ENCODE measurements at regions of chr7 and their contacts with region 1.

Region 1: DNA sequence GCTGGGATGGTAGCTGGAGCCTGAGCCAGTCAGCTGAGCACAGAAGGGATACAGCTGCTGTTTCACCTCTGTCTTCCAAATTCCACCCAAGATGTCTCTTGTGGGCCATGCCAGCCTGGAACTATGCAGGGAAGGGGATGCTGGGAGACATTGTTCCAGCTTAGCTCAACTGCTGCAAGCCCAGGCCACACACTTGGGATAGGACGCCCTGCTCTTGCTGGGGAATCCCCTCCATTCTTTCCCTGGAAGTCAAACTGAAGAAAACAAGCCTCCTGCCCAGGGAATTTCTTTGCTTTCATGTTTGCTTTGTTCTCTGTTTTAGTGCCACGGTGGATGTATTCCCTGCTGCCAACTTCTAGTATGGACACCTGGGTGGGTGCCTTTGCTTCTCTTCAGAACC is 55.2 kb upstream of the CDK13 start:
- DNase-seq: peak; percentile 19
- H3K4me3 ChIP-seq: no peak overlapping the region
- H3K27ac ChIP-seq: no peak overlapping the region
- H3K4me1 ChIP-seq: no peaks in the 10 kb centered on the region
- H3K27me3 ChIP-seq: peaks cover 22 to 28% of the 10 kb centered on the region in 2 experiments
- CTCF ChIP-seq: no peak
- POLR2A ChIP-seq: no peak

Region 2: DNA sequence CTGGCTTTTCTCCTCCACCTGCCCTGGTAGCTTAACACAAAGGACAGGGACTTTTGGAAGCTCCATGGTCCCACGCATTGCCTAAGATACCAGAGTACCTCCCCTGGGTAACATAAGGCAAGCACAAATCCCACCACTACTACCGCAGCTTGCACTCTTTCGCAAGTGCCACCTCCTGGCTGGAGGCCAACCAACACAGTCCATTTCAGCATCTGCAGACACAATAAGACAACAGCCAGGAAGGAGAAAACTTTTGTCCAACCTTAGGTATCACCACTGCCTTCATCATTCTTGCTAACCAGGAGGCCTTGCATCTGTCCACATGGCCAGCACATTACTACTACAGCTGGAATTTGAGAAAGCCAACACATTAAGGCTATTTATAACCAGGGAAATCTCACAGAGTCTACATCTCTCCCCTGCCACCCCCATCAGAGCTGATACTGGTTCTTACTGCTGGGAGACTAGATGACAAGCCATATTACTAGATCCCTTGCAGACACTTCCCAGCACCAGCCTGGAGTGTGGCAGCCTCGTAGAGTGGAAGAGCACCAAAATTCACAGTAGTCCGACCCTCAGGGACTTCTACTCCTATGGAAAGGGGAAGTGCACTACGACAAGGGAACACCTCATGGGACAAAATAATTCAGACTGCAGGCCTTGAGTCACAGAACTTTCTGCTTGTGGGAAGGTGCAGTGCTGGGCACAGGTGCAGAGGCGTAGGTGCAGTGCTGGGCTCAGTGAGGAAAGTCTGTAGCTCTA is 15.4 kb after region 1 on chr7:
- CTCF ChIA-PET with region 1: interaction called, 30 read pairs
- POLR2A ChIA-PET with region 1: no interaction called
- dilution Hi-C with region 1: no loop called
- intact Hi-C with region 1: no loop called
- DNase-seq: no peak
- H3K4me3 ChIP-seq: no peak overlapping the region
- H3K27ac ChIP-seq: no peak overlapping the region
- H3K4me1 ChIP-seq: no peaks in the 10 kb centered on the region
- H3K27me3 ChIP-seq: peaks cover 0 to 4% of the 10 kb centered on the region in 2 experiments
- CTCF ChIP-seq: no peak
- POLR2A ChIP-seq: no peak

Region 3: DNA sequence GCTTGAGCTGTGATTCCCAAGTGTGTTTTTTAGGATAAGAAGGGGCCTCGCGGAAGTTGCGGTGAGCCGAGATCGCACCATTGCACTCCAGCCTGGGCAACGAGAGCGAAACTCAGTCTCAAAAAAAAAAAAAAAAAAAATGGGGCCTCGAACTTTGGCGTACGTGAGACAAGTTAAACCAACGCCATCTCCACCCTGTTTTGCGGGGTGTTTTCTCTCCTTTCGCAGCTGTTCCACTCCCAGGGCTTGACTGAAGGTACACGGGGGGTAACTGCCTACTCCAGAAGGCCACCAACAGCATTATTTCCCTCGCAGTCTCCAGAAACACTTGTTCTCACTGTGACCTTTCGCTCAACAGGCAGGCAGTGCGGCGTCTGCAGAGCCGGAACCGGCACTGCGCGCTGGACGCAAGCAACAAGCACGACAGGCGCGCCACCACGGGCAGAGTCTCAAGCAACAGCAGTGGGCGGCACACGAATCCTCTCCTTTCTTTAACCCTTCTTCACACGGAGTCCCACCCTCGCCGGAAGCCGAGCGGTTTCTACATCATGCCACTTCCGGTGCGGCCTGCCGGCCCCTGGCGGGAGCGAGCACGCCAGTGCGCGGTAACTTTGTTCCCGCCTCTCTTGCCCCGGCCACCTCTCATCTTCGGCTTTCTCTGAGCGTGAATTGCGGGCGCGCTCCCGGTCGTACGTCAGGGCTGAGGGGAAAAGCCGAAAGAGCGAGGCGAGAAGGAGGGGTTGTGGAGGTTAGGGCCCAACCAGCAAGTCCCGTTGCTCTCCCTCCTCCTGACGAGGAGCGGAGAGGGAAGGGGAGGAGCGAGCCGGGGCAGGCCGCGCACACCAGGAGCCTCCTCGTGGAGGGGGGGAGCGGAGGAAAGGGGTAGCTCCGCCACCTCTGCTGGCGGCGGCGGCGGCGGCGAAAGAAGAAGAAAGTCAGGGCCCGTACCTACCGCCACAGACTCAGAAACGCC is 54.3 kb after region 1 on chr7:
- CTCF ChIA-PET with region 1: interaction called, 19 read pairs
- POLR2A ChIA-PET with region 1: no interaction called
- dilution Hi-C with region 1: no loop called
- intact Hi-C with region 1: loop called (anchors 1 kb)
- DNase-seq: peak; percentile 100
- H3K4me3 ChIP-seq: peak overlapping the region; percentile 0 to 76 (median 73)
- H3K27ac ChIP-seq: peak overlapping the region; percentile 81
- H3K4me1 ChIP-seq: peaks cover 19% of the 10 kb centered on the region
- H3K27me3 ChIP-seq: no peaks in the 10 kb centered on the region
- CTCF ChIP-seq: no peak
- POLR2A ChIP-seq: peak; percentile 95

Region 4: GRCh38 chr7:40047661-40048060 is 152.8 kb after region 1 on chr7:
- CTCF ChIA-PET with region 1: interaction called, 270 read pairs
- POLR2A ChIA-PET with region 1: no interaction called
- dilution Hi-C with region 1: no loop called
- intact Hi-C with region 1: loop called (anchors 1 kb)
- DNase-seq: no peak
- H3K4me3 ChIP-seq: no peak overlapping the region
- H3K27ac ChIP-seq: no peak overlapping the region
- H3K4me1 ChIP-seq: peaks cover 7% of the 10 kb centered on the region
- H3K27me3 ChIP-seq: no peaks in the 10 kb centered on the region
- CTCF ChIP-seq: no peak
- POLR2A ChIP-seq: no peak

Region 5: GRCh38 chr7:40134428-40135316 is 239.8 kb after region 1 on chr7 and contains the starts of genes MPLKIP and SUGCT:
- CTCF ChIA-PET with region 1: interaction called, 23 read pairs
- POLR2A ChIA-PET with region 1: no interaction called
- dilution Hi-C with region 1: no loop called
- intact Hi-C with region 1: loop called (anchors 1 kb)
- DNase-seq: peak; percentile 89
- H3K4me3 ChIP-seq: peak within 1 kb of the TSS; percentile 63 to 99 (median 99)
- H3K27ac ChIP-seq: peak within 1 kb of the TSS; percentile 67
- H3K4me1 ChIP-seq: peaks cover 14% of the 10 kb centered on the region
- H3K27me3 ChIP-seq: no peaks in the 10 kb centered on the region
- CTCF ChIP-seq: peak; percentile 96 to 99
- POLR2A ChIP-seq: peak; percentile 35
- total RNA-seq, gene MPLKIP: 40.5 and 40.9 TPM in 2 replicates
- total RNA-seq, gene SUGCT: 1.4 and 2.2 TPM in 2 replicates

Measured in endothelial cell of umbilical vein (primary cell).